AG04450 (cell line): ENCODE measurements at regions of chr13 and their contacts with region 1.

Region 1: GRCh38 chr13:89361909-89362308 is 1690.7 kb downstream of the SLITRK5 start:
- DNase-seq: no peak
- H3K4me3 ChIP-seq: no peak overlapping the region
- H3K27ac ChIP-seq: no peak overlapping the region
- H3K27me3 ChIP-seq: no peaks in the 10 kb centered on the region
- CTCF ChIP-seq: peak; percentile 37; the same call in 1 of the 2 replicates

Region 2: GRCh38 chr13:89695343-89696257 is 333.7 kb after region 1 on chr13:
- CTCF ChIA-PET with region 1: interaction called, 23 read pairs
- POLR2A ChIA-PET with region 1: no interaction called
- DNase-seq: peak; percentile 6
- H3K4me3 ChIP-seq: no peak overlapping the region
- H3K27ac ChIP-seq: no peak overlapping the region
- H3K27me3 ChIP-seq: no peaks in the 10 kb centered on the region
- CTCF ChIP-seq: peak; percentile 78

Region 3: DNA sequence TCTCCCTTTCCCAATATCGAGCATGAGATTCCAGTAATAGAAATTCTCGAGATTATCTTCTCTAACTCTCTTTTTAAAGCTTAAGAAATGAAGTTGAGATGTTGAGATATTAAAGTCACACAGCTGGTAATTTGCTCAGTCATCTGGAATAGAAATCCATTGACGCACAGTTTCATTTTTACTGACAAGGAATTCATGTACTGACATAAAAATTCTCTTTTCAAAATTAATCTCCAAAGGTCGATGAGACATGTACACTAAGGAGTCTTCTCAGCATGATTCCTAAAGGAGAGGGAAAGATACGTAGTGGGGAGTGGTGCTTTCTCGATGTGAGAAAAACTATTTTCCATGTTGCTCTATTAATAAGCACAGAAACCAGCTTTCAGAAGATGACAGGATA is 346.1 kb after region 1 on chr13:
- CTCF ChIA-PET with region 1: no interaction called
- POLR2A ChIA-PET with region 1: no interaction called
- DNase-seq: no peak
- H3K4me3 ChIP-seq: no peak overlapping the region
- H3K27ac ChIP-seq: no peak overlapping the region
- H3K27me3 ChIP-seq: no peaks in the 10 kb centered on the region
- CTCF ChIP-seq: no peak